IMR-90 (cell line): ENCODE measurements at regions of chr3 and their contacts with region 1.

Region 1: GRCh38 chr3:29759411-29760225 is 478.7 kb downstream of the RBMS3 start:
- DNase-seq: peak; percentile 21
- ATAC-seq: no peak
- H3K4me3 ChIP-seq: no peak overlapping the region
- H3K27ac ChIP-seq: peak overlapping the region; percentile 65
- H3K4me1 ChIP-seq: peaks cover 21% of the 10 kb centered on the region
- H3K27me3 ChIP-seq: no peaks in the 10 kb centered on the region
- CTCF ChIP-seq: no peak
- POLR2A ChIP-seq: no peak
- RAD21 ChIP-seq: no peak

Region 2: GRCh38 chr3:29627136-29628117 is 132.2 kb before region 1 on chr3:
- CTCF ChIA-PET with region 1: no interaction called
- POLR2A ChIA-PET with region 1: no interaction called
- dilution Hi-C with region 1: no loop called
- in situ Hi-C with region 1: no loop called
- intact Hi-C with region 1: loop called (anchors 10 kb)
- DNase-seq: peak; percentile 23
- ATAC-seq: peak; percentile 67
- H3K4me3 ChIP-seq: no peak overlapping the region
- H3K27ac ChIP-seq: no peak overlapping the region
- H3K4me1 ChIP-seq: peaks cover 3% of the 10 kb centered on the region
- H3K27me3 ChIP-seq: no peaks in the 10 kb centered on the region
- CTCF ChIP-seq: no peak
- POLR2A ChIP-seq: no peak
- RAD21 ChIP-seq: no peak